Activated naive CD4-positive, alpha-beta T cell treated with anti-CD3 and anti-CD28 coated beads for 36 hours (primary cell): ENCODE measurements at regions of chr12 and their contacts with region 1.

Region 1: DNA sequence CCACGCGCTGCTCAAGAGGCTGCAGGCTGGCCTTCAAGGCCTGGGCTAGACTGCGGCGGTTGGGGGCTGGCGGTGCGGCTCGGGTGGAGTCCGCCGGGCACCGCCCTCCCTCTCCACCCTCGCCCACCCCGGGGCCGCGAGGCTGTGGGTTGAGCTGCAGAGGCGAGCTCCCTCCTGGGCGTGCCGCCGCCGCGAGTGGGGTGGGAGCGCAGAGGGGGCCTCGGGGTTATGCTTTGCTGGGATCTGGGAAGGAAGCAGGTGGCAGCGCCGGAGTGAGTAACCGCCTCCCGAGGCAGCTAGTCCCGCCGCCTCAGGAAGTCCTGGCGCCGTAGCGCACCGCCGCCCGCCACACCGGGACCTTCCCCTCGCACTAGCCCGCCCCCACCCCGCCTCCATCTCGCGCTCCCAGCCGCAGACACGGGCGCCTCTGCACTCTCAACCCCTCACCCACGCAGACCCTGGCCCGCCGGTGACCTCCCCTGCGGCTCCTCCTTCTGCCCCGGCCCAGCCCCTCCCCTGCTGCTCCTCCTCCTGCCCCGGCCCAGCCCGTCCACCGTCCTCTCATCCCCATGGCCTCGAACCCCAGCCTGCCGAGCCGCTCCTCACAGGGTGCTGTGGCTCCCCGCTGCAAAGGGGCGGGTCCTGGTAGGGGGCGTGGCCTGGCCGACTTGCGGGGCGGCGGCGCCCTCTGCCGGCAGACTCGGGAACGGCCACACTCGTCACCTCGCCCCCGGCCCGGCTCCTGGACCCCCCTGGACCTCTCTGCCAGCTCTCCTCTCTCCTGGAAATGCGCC is 16.6 kb downstream of the TAMALIN start:
- DNase-seq: peak; percentile 94
- H3K4me3 Mint-ChIP-seq: peak overlapping the region; percentile 89
- H3K27ac Mint-ChIP-seq: peak overlapping the region; percentile 97
- H3K4me1 Mint-ChIP-seq: peaks cover 39% of the 10 kb centered on the region
- H3K27me3 Mint-ChIP-seq: no peaks in the 10 kb centered on the region

Region 2: GRCh38 chr12:51886021-51886322 is 137.4 kb before region 1 on chr12:
- CTCF ChIA-PET with region 1: interaction called, 7 read pairs
- intact Hi-C with region 1: loop called (anchors 2 kb)
- DNase-seq: peak; percentile 78
- H3K4me3 Mint-ChIP-seq: peak overlapping the region; percentile 2
- H3K27ac Mint-ChIP-seq: peak overlapping the region; percentile 81
- H3K4me1 Mint-ChIP-seq: peaks cover 10% of the 10 kb centered on the region
- H3K27me3 Mint-ChIP-seq: no peaks in the 10 kb centered on the region

Region 3: GRCh38 chr12:51994959-51995358 is 28.4 kb before region 1 on chr12:
- CTCF ChIA-PET with region 1: interaction called, 312 read pairs
- intact Hi-C with region 1: loop called (anchors 1 kb)
- DNase-seq: no peak
- H3K4me3 Mint-ChIP-seq: no peak overlapping the region
- H3K27ac Mint-ChIP-seq: no peak overlapping the region
- H3K4me1 Mint-ChIP-seq: peaks cover 7% of the 10 kb centered on the region
- H3K27me3 Mint-ChIP-seq: no peaks in the 10 kb centered on the region

Region 4: GRCh38 chr12:52055781-52056711 is 32.7 kb after region 1 on chr12:
- CTCF ChIA-PET with region 1: interaction called, 47 read pairs
- intact Hi-C with region 1: loop called (anchors 1 kb)
- DNase-seq: no peak
- H3K4me3 Mint-ChIP-seq: no peak overlapping the region
- H3K27ac Mint-ChIP-seq: no peak overlapping the region
- H3K4me1 Mint-ChIP-seq: peaks cover 27% of the 10 kb centered on the region
- H3K27me3 Mint-ChIP-seq: no peaks in the 10 kb centered on the region

Region 5: DNA sequence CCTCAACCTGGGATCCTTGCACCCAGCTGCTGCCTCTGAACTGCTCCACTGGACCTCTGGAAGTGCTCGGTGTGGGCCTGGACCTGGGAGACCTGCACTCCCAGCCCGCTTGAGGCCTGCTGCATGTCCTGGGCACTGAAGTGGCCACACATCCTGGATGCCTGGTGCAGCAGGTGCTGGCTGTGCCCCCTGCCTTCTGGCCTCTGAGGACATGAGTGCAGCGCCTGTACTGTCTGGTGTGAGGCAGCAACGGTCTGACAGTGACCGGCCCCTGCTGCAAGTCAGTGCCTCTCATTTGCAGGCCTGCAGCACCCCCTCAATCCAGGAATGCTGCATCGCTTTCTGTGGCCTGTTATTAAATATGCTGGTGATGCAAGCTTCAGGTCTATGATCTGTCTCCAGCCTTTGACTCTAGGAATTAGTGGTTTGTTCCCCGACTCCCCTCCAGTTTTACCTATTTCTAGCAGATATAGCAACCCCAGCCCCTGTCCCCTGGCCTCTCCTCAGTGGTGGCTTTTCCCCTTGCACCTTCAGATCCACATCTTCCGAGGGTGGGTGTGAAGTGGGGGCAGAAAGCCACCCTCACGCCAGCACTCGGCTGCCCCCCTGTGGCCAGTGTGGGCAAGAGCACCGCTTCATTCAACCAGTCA is 59.7 kb after region 1 on chr12:
- CTCF ChIA-PET with region 1: interaction called, 306 read pairs
- intact Hi-C with region 1: loop called (anchors 1 kb)
- DNase-seq: peak; percentile 69
- H3K4me3 Mint-ChIP-seq: no peak overlapping the region
- H3K27ac Mint-ChIP-seq: no peak overlapping the region
- H3K4me1 Mint-ChIP-seq: peaks cover 10% of the 10 kb centered on the region
- H3K27me3 Mint-ChIP-seq: peaks cover 4% of the 10 kb centered on the region

Region 6: GRCh38 chr12:52221912-52222457 is 198.6 kb after region 1 on chr12:
- CTCF ChIA-PET with region 1: interaction called, 3 read pairs
- intact Hi-C with region 1: loop called (anchors 1 kb)
- DNase-seq: peak; percentile 96
- H3K4me3 Mint-ChIP-seq: no peak overlapping the region
- H3K27ac Mint-ChIP-seq: peak overlapping the region; percentile 14
- H3K4me1 Mint-ChIP-seq: peaks cover 22% of the 10 kb centered on the region
- H3K27me3 Mint-ChIP-seq: peaks cover 25% of the 10 kb centered on the region